ENCODE measurements at regions of chr14 and their contacts with region 1.

Region 1: DNA sequence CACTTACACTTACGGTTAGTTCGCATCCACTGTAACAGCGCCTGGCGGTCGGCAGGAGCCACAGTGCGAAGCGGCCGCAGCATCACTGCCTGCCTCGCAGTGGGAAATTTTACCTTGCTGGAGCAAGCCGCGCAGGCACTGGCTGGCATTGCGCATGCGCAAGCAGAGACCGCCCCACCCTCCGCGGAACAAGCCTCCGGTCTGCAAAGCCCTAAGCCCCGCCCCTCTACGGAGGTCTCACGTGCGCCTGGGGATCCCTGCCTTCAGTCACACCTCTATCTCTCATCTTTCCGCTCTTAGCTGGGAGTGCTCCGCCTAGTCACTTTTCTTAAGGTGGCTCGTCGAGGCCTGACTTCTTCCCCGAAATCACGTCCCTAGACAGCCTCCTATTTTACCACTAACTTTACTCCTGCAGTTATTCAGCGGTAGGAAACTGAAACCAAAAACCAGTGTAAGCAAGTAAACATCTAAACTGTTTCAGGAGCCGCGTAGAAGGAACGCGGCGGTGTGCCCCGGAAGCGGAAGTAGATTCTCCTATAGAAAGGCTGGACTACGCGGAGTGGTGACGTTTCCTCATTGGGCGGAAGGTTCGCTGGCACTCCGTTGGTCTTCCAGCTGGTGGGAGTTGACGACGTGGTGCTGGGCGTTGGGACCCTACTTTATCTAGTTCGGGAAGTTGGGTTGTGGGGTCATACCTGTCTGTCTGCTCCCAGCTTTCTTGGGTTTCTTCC is at the start of gene SRP54:
- DNase-seq: peak; percentile 97
- ATAC-seq: peak; percentile 88
- H3K4me3 ChIP-seq: peak within 1 kb of the TSS; percentile 76 to 94
- H3K27ac ChIP-seq: peak within 1 kb of the TSS; percentile 91
- H3K4me1 ChIP-seq: peaks cover 11 to 17% of the 10 kb centered on the region in 2 experiments; a peak in 3 of 4 replicates
- H3K27me3 ChIP-seq: no peaks in the 10 kb centered on the region
- CTCF ChIP-seq: peak in 1 of 3 experiments; percentile 27; a peak in 1 of 6 replicates
- POLR2A ChIP-seq: peak; percentile 91
- RAD21 ChIP-seq: no peak
- total RNA-seq, gene SRP54: 53.0 TPM

Region 2: DNA sequence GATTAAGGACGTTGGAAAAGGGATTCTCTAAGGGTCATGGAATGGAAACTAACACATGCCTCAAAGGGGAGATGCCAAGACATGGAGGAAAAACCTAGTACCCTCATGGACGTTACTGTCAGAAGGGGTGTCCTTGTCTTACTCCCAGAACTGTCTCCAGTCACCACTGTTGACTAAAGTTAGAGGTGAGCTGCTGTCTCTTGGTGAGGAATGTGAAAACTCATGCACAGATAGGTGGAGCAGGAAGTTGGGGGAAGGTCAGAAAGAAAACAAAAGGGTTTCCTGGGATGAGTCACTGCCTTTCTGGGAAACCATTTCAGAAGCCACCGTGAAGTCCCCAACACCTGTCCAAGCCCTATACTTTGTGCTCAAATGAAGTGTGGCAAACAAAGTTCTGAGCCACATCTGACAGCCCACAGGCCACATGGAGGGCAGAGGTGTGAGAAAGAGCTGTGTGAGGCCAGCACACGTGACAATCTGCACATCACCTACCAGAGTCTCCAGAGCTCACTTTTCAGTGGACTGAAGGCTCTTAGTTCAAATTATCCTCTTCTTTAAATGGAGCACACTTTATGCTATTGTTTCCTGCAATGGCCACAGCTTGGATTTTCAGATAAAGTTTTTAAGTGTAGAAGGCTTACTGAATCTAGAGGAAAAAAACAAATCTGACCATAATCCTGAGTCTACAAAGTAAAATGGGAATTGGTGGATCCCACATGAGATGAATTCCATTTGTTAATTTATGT is 938.8 kb before region 1 on chr14:
- CTCF ChIA-PET with region 1: no interaction called
- POLR2A ChIA-PET with region 1: no interaction called
- RAD21 ChIA-PET with region 1: no interaction called
- intact Hi-C with region 1: no loop called
- DNase-seq: peak; percentile 82
- ATAC-seq: peak; percentile 91
- H3K4me3 ChIP-seq: peak overlapping the region in 1 of 2 experiments; percentile 39; a peak in 2 of 4 replicates
- H3K27ac ChIP-seq: peak overlapping the region; percentile 40
- H3K4me1 ChIP-seq: peaks cover 18 to 29% of the 10 kb centered on the region in 2 experiments
- H3K27me3 ChIP-seq: no peaks in the 10 kb centered on the region
- CTCF ChIP-seq: no peak
- POLR2A ChIP-seq: no peak
- RAD21 ChIP-seq: peak; percentile 37; the same call in 1 of the 2 replicates

Region 3: GRCh38 chr14:34671716-34672115 is 310.9 kb before region 1 on chr14:
- CTCF ChIA-PET with region 1: interaction called, 3 read pairs
- POLR2A ChIA-PET with region 1: no interaction called
- RAD21 ChIA-PET with region 1: no interaction called
- intact Hi-C with region 1: loop called (anchors 5 kb)
- DNase-seq: no peak
- ATAC-seq: no peak
- H3K4me3 ChIP-seq: no peak overlapping the region
- H3K27ac ChIP-seq: no peak overlapping the region
- H3K4me1 ChIP-seq: no peaks in the 10 kb centered on the region
- H3K27me3 ChIP-seq: no peaks in the 10 kb centered on the region
- CTCF ChIP-seq: no peak
- POLR2A ChIP-seq: no peak
- RAD21 ChIP-seq: no peak

Region 4: GRCh38 chr14:34733235-34733634 is 249.3 kb before region 1 on chr14:
- CTCF ChIA-PET with region 1: no interaction called
- POLR2A ChIA-PET with region 1: no interaction called
- RAD21 ChIA-PET with region 1: no interaction called
- intact Hi-C with region 1: no loop called
- DNase-seq: peak; percentile 38
- ATAC-seq: peak; percentile 87
- H3K4me3 ChIP-seq: peak overlapping the region in 1 of 2 experiments; percentile 12; a peak in 2 of 4 replicates
- H3K27ac ChIP-seq: peak overlapping the region; percentile 32; the same call in 1 of the 2 replicates
- H3K4me1 ChIP-seq: peaks cover 18 to 21% of the 10 kb centered on the region in 2 experiments
- H3K27me3 ChIP-seq: no peaks in the 10 kb centered on the region
- CTCF ChIP-seq: no peak
- POLR2A ChIP-seq: no peak
- RAD21 ChIP-seq: no peak

Region 5: GRCh38 chr14:34875031-34875922 is 107.3 kb before region 1 on chr14 and contains the start of gene BAZ1A:
- CTCF ChIA-PET with region 1: no interaction called
- POLR2A ChIA-PET with region 1: interaction called, 9 read pairs
- RAD21 ChIA-PET with region 1: no interaction called
- intact Hi-C with region 1: loop called (anchors 2 kb)
- DNase-seq: peak; percentile 72
- ATAC-seq: peak; percentile 75
- H3K4me3 ChIP-seq: peak within 1 kb of the TSS; percentile 54 to 91
- H3K27ac ChIP-seq: peak within 1 kb of the TSS; percentile 99
- H3K4me1 ChIP-seq: peaks cover 11 to 15% of the 10 kb centered on the region in 2 experiments; a peak in 3 of 4 replicates
- H3K27me3 ChIP-seq: no peaks in the 10 kb centered on the region
- CTCF ChIP-seq: no peak
- POLR2A ChIP-seq: peak; percentile 95
- RAD21 ChIP-seq: no peak
- total RNA-seq, gene BAZ1A: 24.2 TPM

Region 6: GRCh38 chr14:35046048-35046741 is 63.6 kb after region 1 on chr14 and contains the start of gene FAM177A1:
- CTCF ChIA-PET with region 1: interaction called, 3 read pairs
- POLR2A ChIA-PET with region 1: interaction called, 10 read pairs
- RAD21 ChIA-PET with region 1: no interaction called
- intact Hi-C with region 1: loop called (anchors 1 kb)
- DNase-seq: peak; percentile 92
- ATAC-seq: peak; percentile 97
- H3K4me3 ChIP-seq: peak within 1 kb of the TSS; percentile 81 to 92
- H3K27ac ChIP-seq: peak within 1 kb of the TSS; percentile 95
- H3K4me1 ChIP-seq: peaks cover 10 to 19% of the 10 kb centered on the region in 2 experiments; a peak in 3 of 4 replicates
- H3K27me3 ChIP-seq: no peaks in the 10 kb centered on the region
- CTCF ChIP-seq: no peak
- POLR2A ChIP-seq: peak; percentile 88
- RAD21 ChIP-seq: no peak
- total RNA-seq, gene FAM177A1: 46.2 TPM

Region 7: GRCh38 chr14:35121887-35122695 is 139.5 kb after region 1 on chr14 and contains the starts of genes PPP2R3C and PRORP:
- CTCF ChIA-PET with region 1: no interaction called
- POLR2A ChIA-PET with region 1: interaction called, 3 read pairs
- RAD21 ChIA-PET with region 1: no interaction called
- intact Hi-C with region 1: loop called (anchors 2 kb)
- DNase-seq: peak; percentile 93
- ATAC-seq: peak; percentile 87
- H3K4me3 ChIP-seq: peak within 1 kb of the TSS; percentile 81 to 91
- H3K27ac ChIP-seq: peak within 1 kb of the TSS; percentile 91
- H3K4me1 ChIP-seq: peaks cover 6 to 23% of the 10 kb centered on the region in 2 experiments
- H3K27me3 ChIP-seq: no peaks in the 10 kb centered on the region
- CTCF ChIP-seq: no peak
- POLR2A ChIP-seq: peak; percentile 41
- RAD21 ChIP-seq: no peak
- total RNA-seq, gene PPP2R3C: 14.1 TPM
- total RNA-seq, gene PRORP: 28.0 TPM

Region 8: DNA sequence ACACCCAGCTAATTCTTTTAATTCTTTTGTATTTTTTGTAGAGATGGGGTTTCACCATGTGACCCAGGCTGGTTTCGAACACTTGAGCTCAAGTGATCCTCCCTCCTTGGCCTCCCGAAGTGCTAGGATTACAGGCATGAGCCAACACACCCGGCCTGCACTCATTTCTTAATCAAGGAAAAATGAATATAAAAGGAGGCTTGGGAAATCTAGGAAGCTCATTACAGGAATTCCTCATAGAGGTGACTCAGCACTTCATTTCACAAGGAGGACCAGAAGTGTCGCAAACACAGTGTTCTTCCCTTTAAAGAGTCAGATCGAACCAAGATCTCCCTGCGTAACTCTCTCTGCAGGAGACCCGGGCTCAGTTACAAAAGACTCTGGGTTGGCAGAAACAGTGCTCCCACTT is 391.7 kb after region 1 on chr14:
- CTCF ChIA-PET with region 1: no interaction called
- POLR2A ChIA-PET with region 1: no interaction called
- RAD21 ChIA-PET with region 1: no interaction called
- intact Hi-C with region 1: no loop called
- DNase-seq: peak; percentile 35
- ATAC-seq: peak; percentile 51
- H3K4me3 ChIP-seq: no peak overlapping the region
- H3K27ac ChIP-seq: peak overlapping the region; percentile 23; the same call in 1 of the 2 replicates
- H3K4me1 ChIP-seq: peaks cover 7 to 19% of the 10 kb centered on the region in 2 experiments
- H3K27me3 ChIP-seq: no peaks in the 10 kb centered on the region
- CTCF ChIP-seq: no peak
- POLR2A ChIP-seq: no peak
- RAD21 ChIP-seq: no peak

Measured in HCT116 (cell line).